Posterior vena cava (tissue), 2 donors: ENCODE measurements at regions of chr9 and their contacts with region 1.

Region 1: DNA sequence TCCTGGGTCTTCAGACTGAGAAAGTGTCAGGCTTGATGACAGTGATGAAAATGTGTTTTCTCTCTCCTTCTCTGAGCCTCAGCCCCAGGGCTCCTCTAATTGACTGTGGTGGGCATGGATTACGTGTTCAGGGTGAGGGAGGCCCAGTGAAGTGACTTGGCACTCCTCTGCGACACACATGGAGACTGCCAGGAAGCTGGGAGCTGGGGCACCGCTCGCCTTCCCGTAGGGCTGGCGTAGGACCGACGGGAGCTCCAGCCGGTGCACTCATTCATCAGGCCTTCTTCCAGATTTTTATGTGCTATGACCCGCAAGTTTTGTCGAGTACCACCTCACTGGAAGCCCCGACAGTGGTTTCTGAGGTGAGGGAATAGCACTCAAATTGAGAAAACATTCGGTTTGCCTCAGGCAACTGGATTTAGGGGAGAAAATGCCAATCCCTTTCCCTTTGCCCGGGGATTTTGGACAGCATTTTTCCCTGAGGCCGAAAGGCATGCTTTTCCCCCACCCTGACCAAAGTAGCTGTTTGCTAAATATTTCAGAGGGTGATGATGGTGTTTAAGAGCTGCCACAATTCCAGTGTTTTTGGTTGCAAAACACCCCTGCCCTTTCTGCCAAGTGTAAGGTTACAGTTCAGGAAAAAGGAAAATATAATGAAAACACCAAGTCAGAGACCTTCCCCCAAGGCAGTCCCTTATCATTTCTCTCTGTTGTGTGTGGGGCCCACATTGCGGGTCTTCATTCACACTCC is 83.7 kb downstream of the PCSK5 start:
- DNase-seq: no peak

Region 2: GRCh38 chr9:75990576-75991304 is 16.5 kb after region 1 on chr9:
- intact Hi-C with region 1: loop called in 1 of 2 experiments (anchors 2 kb)
- DNase-seq: no peak